ENCODE measurements at regions of chr12 and their contacts with region 1.

Region 1: DNA sequence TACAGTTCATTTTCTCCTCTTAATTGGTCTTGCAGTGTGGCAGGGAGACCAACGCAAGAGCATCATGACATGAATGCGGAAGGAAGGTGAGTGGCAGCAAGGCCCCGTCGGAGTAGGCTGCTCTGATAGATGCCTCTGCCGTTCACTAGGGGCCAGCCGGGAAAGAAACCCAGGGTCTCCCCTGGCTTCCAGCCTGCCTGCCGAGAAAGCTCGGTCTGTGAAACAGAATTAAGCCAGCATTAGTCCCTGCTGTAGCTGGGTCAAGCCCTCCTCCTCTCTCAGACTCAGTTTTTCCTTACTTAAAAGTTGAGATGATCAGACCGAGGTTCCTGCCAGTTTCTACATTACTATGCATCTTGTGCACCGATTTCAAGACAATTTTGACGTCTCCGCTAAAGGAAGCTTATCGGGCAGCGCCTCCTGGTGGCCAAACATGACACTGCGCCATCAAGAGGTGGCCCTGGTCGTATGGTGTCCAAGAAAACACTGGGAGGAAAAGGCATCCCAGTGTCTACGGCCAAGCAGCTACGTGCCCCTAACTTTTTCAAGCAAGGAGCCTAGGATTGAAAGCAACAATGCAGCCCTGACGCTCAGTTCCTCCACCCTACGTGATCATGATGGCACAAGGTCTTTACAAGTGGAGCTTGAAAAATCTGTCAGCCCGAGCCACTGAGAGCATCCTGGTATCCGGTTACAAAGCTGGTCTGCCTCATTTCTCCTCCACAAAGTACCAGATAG is 131.6 kb downstream of the KSR2 start:
- DNase-seq: peak; percentile 69 to 90 (median 86)
- ATAC-seq: peak; percentile 89
- H3K4me3 ChIP-seq: no peak overlapping the region
- H3K4me1 ChIP-seq: no peaks in the 10 kb centered on the region
- CTCF ChIP-seq: peak; percentile 90

Region 2: DNA sequence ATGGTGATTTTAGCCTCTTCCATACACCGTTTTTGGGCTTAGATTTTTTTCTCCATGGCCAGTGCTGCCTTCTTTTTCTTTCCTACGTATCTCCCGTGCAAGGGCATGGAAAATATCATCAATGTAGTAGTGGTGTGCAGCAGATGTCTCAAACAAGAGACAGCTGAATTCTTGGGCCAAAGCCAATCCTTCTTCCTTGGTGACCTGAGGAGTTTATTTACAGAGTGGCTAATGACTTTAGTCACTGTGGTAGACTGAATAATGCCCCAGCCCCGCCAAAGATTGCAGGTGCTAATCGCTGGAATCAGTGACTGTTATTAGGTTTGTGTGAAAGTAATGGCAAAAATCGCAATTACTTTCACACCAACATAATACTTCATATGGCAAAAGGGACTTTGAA is 240.2 kb before region 1 on chr12:
- intact Hi-C with region 1: loop called in 1 of 2 experiments (anchors 10 kb)
- DNase-seq: no peak
- ATAC-seq: no peak
- H3K4me3 ChIP-seq: no peak overlapping the region
- H3K4me1 ChIP-seq: no peaks in the 10 kb centered on the region
- CTCF ChIP-seq: no peak

Region 3: GRCh38 chr12:117986705-117987469 is 149.7 kb after region 1 on chr12:
- intact Hi-C with region 1: no loop called
- DNase-seq: no peak
- ATAC-seq: no peak
- H3K4me3 ChIP-seq: no peak overlapping the region
- H3K4me1 ChIP-seq: no peaks in the 10 kb centered on the region
- CTCF ChIP-seq: no peak

Measured in mucosa of descending colon (tissue), 3 donors.